ENCODE measurements at regions of chr19 and their contacts with region 1.

Region 1: GRCh38 chr19:14136509-14137281 is at the start of gene ASF1B:
- DNase-seq: peak; percentile 100
- H3K4me3 ChIP-seq: peak within 1 kb of the TSS; percentile 59 to 93 (median 72)
- H3K27ac ChIP-seq: peak within 1 kb of the TSS; percentile 71
- H3K4me1 ChIP-seq: peaks cover 15% of the 10 kb centered on the region
- H3K27me3 ChIP-seq: no peaks in the 10 kb centered on the region
- CTCF ChIP-seq: peak; percentile 85 to 96
- POLR2A ChIP-seq: peak; percentile 90
- total RNA-seq, gene ASF1B: 37.1 and 39.1 TPM in 2 replicates

Region 2: DNA sequence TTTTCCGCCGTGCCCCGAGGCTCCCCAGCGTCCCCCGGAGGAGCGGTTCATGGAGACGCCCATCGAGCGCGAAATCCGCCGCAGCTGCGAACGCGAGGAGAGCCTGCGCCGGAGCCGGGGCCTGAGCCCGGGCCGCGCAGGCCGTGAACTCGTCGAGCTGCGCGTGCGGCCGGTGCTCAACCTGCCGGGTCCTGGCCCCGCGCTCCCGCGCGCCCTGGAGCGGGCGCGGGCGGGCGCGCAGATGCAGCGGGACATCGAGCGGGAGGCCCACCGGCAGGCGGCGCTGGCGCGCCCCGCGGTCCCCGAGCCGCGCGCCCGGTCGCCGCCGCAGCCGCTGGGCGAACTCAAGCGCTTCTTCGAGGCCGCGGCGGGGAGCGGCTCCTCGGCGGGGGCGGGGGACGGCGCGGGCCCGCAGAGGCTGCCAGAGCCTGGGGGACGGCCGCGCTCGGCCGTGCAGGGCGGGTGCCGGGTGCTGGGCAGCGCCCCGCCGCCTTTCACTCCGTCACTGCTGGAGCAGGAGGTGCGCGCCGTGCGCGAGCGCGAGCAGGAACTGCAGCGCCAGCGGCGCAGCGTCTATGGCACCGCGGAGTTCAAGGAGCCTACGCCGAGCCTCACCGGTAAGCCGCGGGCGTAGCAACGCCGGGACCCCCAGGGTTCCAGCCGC is 63.3 kb before region 1 on chr19:
- CTCF ChIA-PET with region 1: interaction called, 11 read pairs
- POLR2A ChIA-PET with region 1: no interaction called
- dilution Hi-C with region 1: no loop called
- intact Hi-C with region 1: loop called (anchors 1 kb)
- DNase-seq: peak; percentile 59
- H3K4me3 ChIP-seq: peak overlapping the region; percentile 29 to 61 (median 43)
- H3K27ac ChIP-seq: no peak overlapping the region
- H3K4me1 ChIP-seq: peaks cover 26% of the 10 kb centered on the region
- H3K27me3 ChIP-seq: no peaks in the 10 kb centered on the region
- CTCF ChIP-seq: peak; percentile 35 to 60
- POLR2A ChIP-seq: no peak

Region 3: DNA sequence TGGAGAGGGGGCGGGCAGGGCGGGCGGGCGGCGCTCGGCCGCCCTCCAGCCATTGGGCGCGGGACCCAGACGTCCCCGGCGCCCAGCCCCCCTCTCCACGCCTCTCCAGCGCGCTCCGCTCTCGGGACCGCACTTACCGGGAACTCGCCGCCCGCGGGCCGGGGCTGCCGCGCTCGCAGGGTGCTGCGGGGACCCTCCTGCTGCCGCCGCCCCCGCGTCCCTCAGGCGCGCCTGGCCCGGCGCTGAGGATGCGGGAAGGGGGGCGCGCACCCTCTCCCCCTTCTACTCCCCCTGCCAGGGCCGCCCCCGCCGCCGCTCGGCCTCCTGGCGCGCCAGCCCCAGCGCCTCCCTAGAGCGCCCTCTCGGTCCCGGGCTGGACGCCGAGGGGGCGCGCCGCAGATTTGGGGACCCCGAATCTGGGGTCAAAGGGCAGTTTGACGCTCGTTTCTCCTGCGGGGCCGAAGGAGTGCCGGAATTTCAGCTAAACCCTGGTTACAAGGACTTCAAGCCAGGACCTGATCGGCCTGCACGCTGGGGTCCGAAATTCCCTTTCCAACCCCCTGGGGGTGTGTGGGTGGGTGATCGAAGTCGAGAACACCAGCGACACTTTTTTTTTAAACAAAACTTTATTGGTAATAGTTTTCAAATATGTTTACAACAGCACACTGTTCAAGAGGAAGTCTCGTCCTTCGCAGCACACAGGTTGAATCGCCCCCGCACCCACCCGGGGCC is 45.4 kb before region 1 on chr19:
- CTCF ChIA-PET with region 1: interaction called, 7 read pairs
- POLR2A ChIA-PET with region 1: no interaction called
- dilution Hi-C with region 1: no loop called
- intact Hi-C with region 1: loop called (anchors 1 kb)
- DNase-seq: peak; percentile 66
- H3K4me3 ChIP-seq: peak overlapping the region; percentile 52 to 94 (median 86)
- H3K27ac ChIP-seq: peak overlapping the region; percentile 65
- H3K4me1 ChIP-seq: peaks cover 9% of the 10 kb centered on the region
- H3K27me3 ChIP-seq: no peaks in the 10 kb centered on the region
- CTCF ChIP-seq: peak in 1 of 2 donors; percentile 27
- POLR2A ChIP-seq: no peak

Region 4: GRCh38 chr19:14147797-14148605 is 11.3 kb after region 1 on chr19:
- CTCF ChIA-PET with region 1: interaction called, 29 read pairs
- POLR2A ChIA-PET with region 1: interaction called, 3 read pairs
- dilution Hi-C with region 1: no loop called
- intact Hi-C with region 1: loop called (anchors 1 kb)
- DNase-seq: peak; percentile 77
- H3K4me3 ChIP-seq: no peak overlapping the region
- H3K27ac ChIP-seq: peak overlapping the region; percentile 43
- H3K4me1 ChIP-seq: peaks cover 24% of the 10 kb centered on the region
- H3K27me3 ChIP-seq: no peaks in the 10 kb centered on the region
- CTCF ChIP-seq: peak; percentile 86 to 98
- POLR2A ChIP-seq: no peak

Region 5: GRCh38 chr19:14248578-14249011 is 111.9 kb after region 1 on chr19:
- CTCF ChIA-PET with region 1: no interaction called
- POLR2A ChIA-PET with region 1: no interaction called
- dilution Hi-C with region 1: no loop called
- intact Hi-C with region 1: no loop called
- DNase-seq: peak; percentile 57
- H3K4me3 ChIP-seq: peak overlapping the region; percentile 16 to 40 (median 23)
- H3K27ac ChIP-seq: no peak overlapping the region
- H3K4me1 ChIP-seq: peaks cover 3% of the 10 kb centered on the region
- H3K27me3 ChIP-seq: no peaks in the 10 kb centered on the region
- CTCF ChIP-seq: no peak
- POLR2A ChIP-seq: no peak

Region 6: DNA sequence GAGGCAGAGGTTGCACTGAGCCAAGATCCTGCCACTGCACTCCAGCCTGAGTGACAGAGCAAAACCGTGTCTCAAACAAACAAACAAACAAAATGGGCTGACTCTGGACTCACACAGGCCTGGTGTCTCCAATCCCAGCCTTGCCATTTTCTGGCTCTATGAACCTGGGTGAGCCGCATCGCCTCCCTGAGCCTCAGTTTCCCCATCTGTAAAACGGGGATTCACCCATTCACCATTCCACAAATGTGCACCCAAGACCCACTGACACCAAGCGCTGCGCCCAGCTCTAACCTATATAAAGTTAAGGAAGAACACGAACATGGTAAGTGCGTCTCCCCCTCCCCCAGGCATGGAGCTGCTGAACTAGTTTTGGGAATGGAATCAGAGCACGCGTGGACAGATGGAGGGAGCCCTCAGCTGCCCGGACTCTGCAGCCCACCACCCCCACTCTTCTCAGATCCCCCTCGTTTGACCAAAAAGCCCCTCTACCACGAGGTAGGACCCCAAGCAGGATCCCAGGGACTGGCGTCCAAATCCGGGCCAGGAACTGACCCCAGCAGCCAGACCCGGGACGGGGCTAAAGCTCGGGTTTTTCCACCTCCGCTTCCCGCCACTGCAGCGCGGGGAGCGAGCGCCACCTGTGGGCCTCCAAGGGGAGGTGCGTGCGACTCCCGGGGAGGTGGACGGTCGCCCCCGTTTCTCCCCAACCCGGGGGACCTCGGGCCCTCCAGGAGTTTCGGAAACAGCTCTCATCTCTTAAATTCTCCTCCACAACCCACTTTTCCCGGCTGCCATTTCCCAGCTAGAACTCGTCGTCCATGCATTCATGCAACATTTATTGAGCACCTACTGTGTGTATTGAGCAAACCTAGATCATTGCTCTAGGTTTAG is 211.5 kb after region 1 on chr19:
- CTCF ChIA-PET with region 1: interaction called, 34 read pairs
- POLR2A ChIA-PET with region 1: no interaction called
- dilution Hi-C with region 1: no loop called
- intact Hi-C with region 1: loop called (anchors 1 kb)
- DNase-seq: peak; percentile 37
- H3K4me3 ChIP-seq: no peak overlapping the region
- H3K27ac ChIP-seq: no peak overlapping the region
- H3K4me1 ChIP-seq: no peaks in the 10 kb centered on the region
- H3K27me3 ChIP-seq: peaks cover 4% of the 10 kb centered on the region in 2 experiments
- CTCF ChIP-seq: peak; percentile 97 to 99
- POLR2A ChIP-seq: no peak

Region 7: DNA sequence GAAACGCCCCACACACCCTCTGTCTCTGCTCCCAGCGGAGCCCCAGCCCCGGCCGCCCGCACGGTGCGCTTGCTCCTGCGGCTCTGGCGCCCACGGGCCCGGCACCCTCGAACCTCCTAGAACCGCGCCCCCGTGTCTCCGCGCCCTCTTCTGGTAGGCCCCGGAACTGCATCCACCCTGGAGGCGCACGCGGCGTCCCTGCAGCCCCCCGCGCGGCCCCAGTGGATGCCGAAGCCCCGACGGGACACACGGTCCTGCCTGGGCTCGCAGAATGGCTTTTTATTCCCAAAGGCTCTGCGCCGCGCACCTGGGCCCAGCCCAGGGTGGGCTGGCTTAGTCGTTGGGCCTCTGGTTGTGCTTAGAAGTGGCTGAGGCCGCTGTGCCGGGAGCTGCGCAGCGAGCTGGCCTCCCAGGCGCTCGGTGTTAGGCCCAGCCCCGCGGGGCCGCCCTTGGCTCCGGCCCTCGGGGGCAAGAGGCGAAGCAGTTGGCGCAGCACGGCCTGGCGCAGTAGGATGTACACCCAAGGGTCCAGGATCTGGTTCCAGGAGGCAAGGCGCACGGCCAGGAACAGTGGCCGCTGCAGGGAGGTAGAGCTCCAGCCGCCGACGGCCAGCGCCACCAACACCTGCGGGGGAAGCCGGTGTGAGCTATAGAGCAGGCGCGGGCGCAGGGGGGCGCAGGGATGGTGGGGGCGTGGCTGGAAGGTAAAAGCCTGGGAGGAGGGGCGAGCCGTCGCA is 335.7 kb after region 1 on chr19:
- CTCF ChIA-PET with region 1: interaction called, 12 read pairs
- POLR2A ChIA-PET with region 1: no interaction called
- dilution Hi-C with region 1: no loop called
- intact Hi-C with region 1: loop called (anchors 5 kb)
- DNase-seq: peak; percentile 51
- H3K4me3 ChIP-seq: no peak overlapping the region
- H3K27ac ChIP-seq: no peak overlapping the region
- H3K4me1 ChIP-seq: peaks cover 24% of the 10 kb centered on the region
- H3K27me3 ChIP-seq: no peaks in the 10 kb centered on the region
- CTCF ChIP-seq: peak; percentile 96 to 97
- POLR2A ChIP-seq: no peak